B cell (primary cell): ENCODE measurements at regions of chr11 and their contacts with region 1.

Region 1: GRCh38 chr11:34512840-34513681 is 533 bp downstream of the ELF5 start:
- DNase-seq: peak; percentile 60
- ATAC-seq: peak; percentile 82
- H3K4me3 ChIP-seq: no peak overlapping the region
- H3K4me3 Mint-ChIP-seq: no peak overlapping the region
- H3K27ac ChIP-seq: no peak overlapping the region
- H3K27ac Mint-ChIP-seq: no peak overlapping the region
- H3K4me1 ChIP-seq: no peaks in the 10 kb centered on the region
- H3K4me1 Mint-ChIP-seq: no peaks in the 10 kb centered on the region
- H3K27me3 ChIP-seq: peaks cover 0 to 4% (median 0%) of the 10 kb centered on the region in 4 experiments
- H3K27me3 Mint-ChIP-seq: peaks cover 6% of the 10 kb centered on the region
- CTCF ChIP-seq: peak; percentile 80

Region 2: GRCh38 chr11:34454308-34455032 is 58.6 kb before region 1 on chr11:
- CTCF ChIA-PET with region 1: no interaction called
- POLR2A ChIA-PET with region 1: no interaction called
- intact Hi-C with region 1: no loop called
- DNase-seq: no peak
- ATAC-seq: no peak
- H3K4me3 ChIP-seq: no peak overlapping the region
- H3K4me3 Mint-ChIP-seq: no peak overlapping the region
- H3K27ac ChIP-seq: no peak overlapping the region
- H3K27ac Mint-ChIP-seq: no peak overlapping the region
- H3K4me1 ChIP-seq: no peaks in the 10 kb centered on the region
- H3K4me1 Mint-ChIP-seq: peaks cover 4% of the 10 kb centered on the region
- H3K27me3 ChIP-seq: no peaks in the 10 kb centered on the region
- H3K27me3 Mint-ChIP-seq: no peaks in the 10 kb centered on the region
- CTCF ChIP-seq: no peak

Region 3: GRCh38 chr11:34890812-34891211 is 377.8 kb after region 1 on chr11:
- CTCF ChIA-PET with region 1: interaction called, 32 read pairs
- POLR2A ChIA-PET with region 1: no interaction called
- intact Hi-C with region 1: loop called (anchors 1 kb)
- DNase-seq: peak; percentile 26
- ATAC-seq: no peak
- H3K4me3 ChIP-seq: no peak overlapping the region
- H3K4me3 Mint-ChIP-seq: no peak overlapping the region
- H3K27ac ChIP-seq: no peak overlapping the region
- H3K27ac Mint-ChIP-seq: no peak overlapping the region
- H3K4me1 ChIP-seq: no peaks in the 10 kb centered on the region
- H3K4me1 Mint-ChIP-seq: no peaks in the 10 kb centered on the region
- H3K27me3 ChIP-seq: no peaks in the 10 kb centered on the region
- H3K27me3 Mint-ChIP-seq: no peaks in the 10 kb centered on the region
- CTCF ChIP-seq: peak; percentile 54